Prostate gland (tissue), 2 donors: ENCODE measurements at regions of chrX and their contacts with region 1.

Region 1: DNA sequence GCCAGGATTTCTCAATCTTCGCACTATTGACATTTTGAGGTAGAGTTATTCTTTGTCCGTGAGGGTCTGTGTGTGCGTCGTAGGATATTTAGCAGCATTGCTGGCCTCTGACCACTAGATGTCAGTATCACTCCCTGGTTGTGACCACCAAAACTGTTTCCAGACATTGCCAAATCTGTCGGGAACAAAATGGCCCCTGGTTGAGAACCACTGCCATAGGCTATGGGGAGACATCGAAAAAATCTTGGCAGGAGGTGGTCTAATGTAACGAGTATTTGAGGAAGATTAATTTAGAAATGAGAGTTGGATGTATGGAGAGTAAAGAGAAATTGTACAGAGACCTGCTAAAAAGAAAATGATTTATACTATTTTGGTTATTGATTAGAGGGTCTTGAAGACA is 108.4 kb downstream of the DOCK11 start:
- DNase-seq: peak; percentile 10
- H3K4me3 ChIP-seq: no peak overlapping the region
- H3K27ac ChIP-seq: no peak overlapping the region
- H3K4me1 ChIP-seq: no peaks in the 10 kb centered on the region
- H3K27me3 ChIP-seq: no peaks in the 10 kb centered on the region
- CTCF ChIP-seq: peak in 3 of 4 experiments; percentile 54 to 56 (median 56)
- POLR2A ChIP-seq: no peak

Region 2: DNA sequence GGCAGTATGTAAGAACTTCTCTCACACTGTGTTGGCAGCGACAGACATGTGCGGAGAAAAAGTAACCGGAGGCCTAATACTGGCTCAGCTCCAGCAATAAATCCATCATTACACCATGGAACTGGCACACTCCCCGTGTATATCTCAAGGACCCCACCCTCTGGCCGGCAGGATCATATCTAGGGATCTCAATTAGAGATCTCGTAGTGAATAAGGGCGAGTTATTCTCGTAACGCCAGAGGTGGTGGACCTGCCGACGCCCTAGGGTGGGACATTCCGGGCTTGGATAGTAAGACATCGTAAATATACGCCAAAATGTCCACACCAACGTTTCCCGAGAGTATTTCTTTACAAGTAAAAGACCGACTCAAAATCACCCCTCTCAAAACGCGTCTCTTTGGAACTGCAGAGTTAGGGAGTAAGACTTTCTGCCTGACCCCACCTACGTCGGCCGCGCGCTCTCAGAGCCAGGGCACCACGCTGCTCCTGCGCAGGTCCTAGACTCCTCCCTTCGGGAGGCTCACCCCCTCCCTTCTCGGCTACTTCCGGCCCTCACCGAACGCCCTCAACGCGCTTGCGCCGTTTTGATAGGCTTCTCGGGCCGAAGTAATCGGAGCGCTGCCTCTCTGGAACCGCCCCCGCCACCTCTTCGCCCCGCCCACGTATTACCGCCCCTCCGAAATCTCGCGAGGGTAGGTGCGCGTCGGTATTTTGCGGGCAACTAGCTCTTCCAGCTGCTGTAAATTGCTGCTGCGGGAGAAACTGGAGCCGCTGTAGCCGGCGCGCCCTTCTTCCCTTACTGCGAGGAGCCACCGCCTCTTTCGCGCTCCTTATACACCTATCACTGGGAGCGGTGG is 258.4 kb before region 1 on chrX and contains the start of gene WDR44:
- intact Hi-C with region 1: no loop called
- DNase-seq: peak; percentile 90
- H3K4me3 ChIP-seq: peak within 1 kb of the TSS; percentile 56 to 57
- H3K27ac ChIP-seq: peak within 1 kb of the TSS; percentile 91 to 93
- H3K4me1 ChIP-seq: no peaks in the 10 kb centered on the region
- H3K27me3 ChIP-seq: no peaks in the 10 kb centered on the region
- CTCF ChIP-seq: no peak
- POLR2A ChIP-seq: peak; percentile 59
- total RNA-seq, gene WDR44: 15.0 to 22.6 TPM

Region 3: GRCh38 chrX:118459494-118459893 is 144.5 kb before region 1 on chrX:
- intact Hi-C with region 1: loop called (anchors 5 kb)
- DNase-seq: no peak
- H3K4me3 ChIP-seq: no peak overlapping the region
- H3K27ac ChIP-seq: no peak overlapping the region
- H3K4me1 ChIP-seq: no peaks in the 10 kb centered on the region
- H3K27me3 ChIP-seq: no peaks in the 10 kb centered on the region
- CTCF ChIP-seq: peak in 2 of 4 experiments; percentile 8 to 39
- POLR2A ChIP-seq: no peak

Region 4: GRCh38 chrX:118495061-118495921 is 108.7 kb before region 1 on chrX and contains the start of gene DOCK11:
- intact Hi-C with region 1: loop called (anchors 10 kb)
- DNase-seq: peak; percentile 14
- H3K4me3 ChIP-seq: peak within 1 kb of the TSS; percentile 45 to 50
- H3K27ac ChIP-seq: peak within 1 kb of the TSS; percentile 54 to 57
- H3K4me1 ChIP-seq: no peaks in the 10 kb centered on the region
- H3K27me3 ChIP-seq: no peaks in the 10 kb centered on the region
- CTCF ChIP-seq: no peak
- POLR2A ChIP-seq: no peak
- total RNA-seq, gene DOCK11: 2.6 to 4.7 TPM